ENCODE measurements at regions of chr7 and their contacts with region 1.

Region 1: DNA sequence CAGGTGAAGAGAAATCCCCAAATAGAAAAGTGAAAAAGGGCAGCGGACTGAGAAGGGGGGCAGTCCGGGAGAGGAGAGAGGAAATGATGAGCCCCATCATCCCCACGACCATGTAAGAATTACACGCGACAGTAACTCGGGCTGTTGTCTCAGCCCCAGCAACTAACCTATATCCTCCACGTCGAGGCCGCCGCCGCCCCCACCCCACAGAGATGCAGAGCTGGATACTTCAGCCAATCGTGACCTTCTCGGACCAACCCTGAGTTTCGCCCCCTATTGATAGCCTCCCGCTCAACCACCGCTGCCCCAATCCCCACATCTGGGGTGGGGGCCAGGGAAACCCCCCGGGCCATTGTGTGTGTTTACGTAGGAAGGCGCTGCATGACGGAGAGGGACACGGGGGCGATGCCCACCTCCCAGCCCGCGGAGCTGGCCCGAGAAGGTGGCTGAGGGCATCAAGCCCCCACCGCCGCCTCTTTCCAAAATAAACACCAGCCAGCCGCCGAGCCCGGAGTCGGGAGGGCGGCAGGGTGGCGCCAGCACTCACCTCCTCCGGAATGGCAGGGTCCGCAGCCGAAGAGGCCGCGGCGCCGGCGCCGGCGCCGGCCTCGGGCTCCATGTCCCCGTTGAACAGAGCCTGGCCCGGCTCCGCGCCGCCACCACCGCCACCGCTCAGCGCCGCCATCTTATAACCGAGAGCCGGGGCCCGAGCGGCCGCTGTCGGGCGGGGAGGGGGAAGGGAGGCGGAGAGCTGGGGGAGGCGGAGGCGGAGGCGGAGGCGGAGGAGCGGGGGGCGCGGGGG is 509 bp downstream of the BRAF start:
- DNase-seq: peak; percentile 79 to 92 (median 83)
- H3K4me3 ChIP-seq: peak overlapping the region; percentile 68 to 90
- H3K4me3 Mint-ChIP-seq: no peak overlapping the region
- H3K27ac ChIP-seq: peak overlapping the region; percentile 95
- H3K27ac Mint-ChIP-seq: no peak overlapping the region
- H3K4me1 ChIP-seq: peaks cover 28% of the 10 kb centered on the region
- H3K4me1 Mint-ChIP-seq: peaks cover 11 to 29% (median 18%) of the 10 kb centered on the region in 4 donors
- H3K27me3 ChIP-seq: no peaks in the 10 kb centered on the region
- H3K27me3 Mint-ChIP-seq: peaks cover 0 to 4% of the 10 kb centered on the region in 2 donors

Region 2: GRCh38 chr7:140696680-140697446 is 227.4 kb before region 1 on chr7 and contains the start of gene NDUFB2:
- CTCF ChIA-PET with region 1: no interaction called
- POLR2A ChIA-PET with region 1: interaction called, 4 read pairs
- intact Hi-C with region 1: loop called (anchors 1 kb)
- DNase-seq: peak; percentile 84 to 90 (median 90)
- H3K4me3 ChIP-seq: peak within 1 kb of the TSS; percentile 66 to 92
- H3K4me3 Mint-ChIP-seq: peak within 1 kb of the TSS; percentile 93 to 98 (median 97)
- H3K27ac ChIP-seq: peak within 1 kb of the TSS; percentile 89
- H3K27ac Mint-ChIP-seq: peak within 1 kb of the TSS; percentile 96 to 100 (median 98)
- H3K4me1 ChIP-seq: peaks cover 32% of the 10 kb centered on the region
- H3K4me1 Mint-ChIP-seq: peaks cover 18 to 48% (median 33%) of the 10 kb centered on the region in 4 donors
- H3K27me3 ChIP-seq: no peaks in the 10 kb centered on the region
- H3K27me3 Mint-ChIP-seq: no peaks in the 10 kb centered on the region
- total RNA-seq, gene NDUFB2: 94.4 to 98.6 TPM

Region 3: DNA sequence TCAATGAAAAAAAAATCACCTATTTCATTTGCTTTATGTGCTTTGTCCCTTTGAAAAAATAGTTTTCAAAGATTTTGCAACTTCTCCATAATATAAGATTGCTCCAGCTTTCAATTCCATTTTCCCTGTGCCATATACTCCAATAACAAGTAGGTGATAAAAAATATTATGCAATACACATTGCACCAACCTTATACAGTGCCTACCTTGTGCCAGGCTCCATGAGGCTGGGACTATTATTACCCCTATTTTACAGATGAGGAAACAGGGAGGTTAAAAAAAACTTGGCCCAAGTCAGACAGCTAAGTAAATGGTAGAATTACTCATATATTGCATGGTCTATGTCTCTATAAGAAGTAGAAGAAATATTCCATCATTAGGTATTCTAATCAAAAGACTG is 57.3 kb before region 1 on chr7:
- CTCF ChIA-PET with region 1: no interaction called
- POLR2A ChIA-PET with region 1: no interaction called
- intact Hi-C with region 1: no loop called
- DNase-seq: no peak
- H3K4me3 ChIP-seq: no peak overlapping the region
- H3K4me3 Mint-ChIP-seq: no peak overlapping the region
- H3K27ac ChIP-seq: no peak overlapping the region
- H3K27ac Mint-ChIP-seq: no peak overlapping the region
- H3K4me1 ChIP-seq: no peaks in the 10 kb centered on the region
- H3K4me1 Mint-ChIP-seq: peaks cover 34 to 73% (median 53%) of the 10 kb centered on the region in 4 donors
- H3K27me3 ChIP-seq: no peaks in the 10 kb centered on the region
- H3K27me3 Mint-ChIP-seq: no peaks in the 10 kb centered on the region

Measured in CD4-positive, alpha-beta memory T cell (primary cell).